AG04449 (cell line): ENCODE measurements at regions of chr14 and their contacts with region 1.

Region 1: DNA sequence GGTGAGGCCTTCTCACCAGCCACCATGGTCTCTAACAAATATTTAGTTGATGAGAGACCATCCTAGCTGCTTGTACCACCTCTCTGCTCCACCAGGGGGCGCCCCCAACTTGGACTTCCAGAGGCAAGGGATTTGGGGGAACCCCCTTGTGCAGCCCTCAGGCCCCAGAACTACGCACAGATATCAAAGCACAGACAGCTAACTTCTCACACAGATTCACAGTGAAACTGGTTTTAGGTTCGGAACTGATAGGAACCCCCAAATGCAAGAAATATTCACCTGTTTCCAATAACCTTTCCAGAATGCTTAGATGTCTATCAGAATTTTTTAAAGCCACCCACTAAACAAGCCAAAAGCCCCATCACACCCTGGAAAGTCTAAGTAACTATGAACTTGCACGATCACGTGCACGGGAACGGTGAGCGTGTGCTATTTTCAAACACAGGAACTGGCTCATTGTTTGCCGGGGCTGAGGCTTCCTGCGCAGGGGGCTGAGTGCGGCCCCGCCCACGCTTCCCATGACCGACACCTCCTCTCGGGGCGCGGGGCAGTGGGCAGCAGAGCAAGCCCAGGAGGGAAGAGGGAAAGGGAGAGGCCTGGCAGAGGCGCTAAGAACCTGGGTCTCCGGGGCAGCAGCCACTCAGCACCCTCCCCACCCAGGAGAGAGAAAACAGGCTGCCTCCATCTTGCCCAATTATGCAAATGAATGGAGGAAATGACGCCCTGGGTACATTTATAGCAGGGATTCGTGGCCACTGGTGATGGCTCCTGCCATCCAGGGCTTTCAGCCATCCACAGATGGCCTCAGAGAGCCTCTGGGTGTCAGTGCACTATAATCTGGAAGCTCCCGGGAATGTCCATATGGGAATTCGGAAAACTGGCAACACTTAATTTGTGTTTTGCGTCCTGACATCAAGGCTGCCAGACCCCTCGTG is 79.4 kb upstream of the GPR68 start:
- DNase-seq: no peak
- H3K4me3 ChIP-seq: peak overlapping the region; percentile 33
- CTCF ChIP-seq: peak; percentile 87

Region 2: GRCh38 chr14:91341751-91342154 is 17.8 kb after region 1 on chr14:
- CTCF ChIA-PET with region 1: interaction called, 81 read pairs
- POLR2A ChIA-PET with region 1: no interaction called
- DNase-seq: no peak
- H3K4me3 ChIP-seq: no peak overlapping the region
- CTCF ChIP-seq: no peak

Region 3: DNA sequence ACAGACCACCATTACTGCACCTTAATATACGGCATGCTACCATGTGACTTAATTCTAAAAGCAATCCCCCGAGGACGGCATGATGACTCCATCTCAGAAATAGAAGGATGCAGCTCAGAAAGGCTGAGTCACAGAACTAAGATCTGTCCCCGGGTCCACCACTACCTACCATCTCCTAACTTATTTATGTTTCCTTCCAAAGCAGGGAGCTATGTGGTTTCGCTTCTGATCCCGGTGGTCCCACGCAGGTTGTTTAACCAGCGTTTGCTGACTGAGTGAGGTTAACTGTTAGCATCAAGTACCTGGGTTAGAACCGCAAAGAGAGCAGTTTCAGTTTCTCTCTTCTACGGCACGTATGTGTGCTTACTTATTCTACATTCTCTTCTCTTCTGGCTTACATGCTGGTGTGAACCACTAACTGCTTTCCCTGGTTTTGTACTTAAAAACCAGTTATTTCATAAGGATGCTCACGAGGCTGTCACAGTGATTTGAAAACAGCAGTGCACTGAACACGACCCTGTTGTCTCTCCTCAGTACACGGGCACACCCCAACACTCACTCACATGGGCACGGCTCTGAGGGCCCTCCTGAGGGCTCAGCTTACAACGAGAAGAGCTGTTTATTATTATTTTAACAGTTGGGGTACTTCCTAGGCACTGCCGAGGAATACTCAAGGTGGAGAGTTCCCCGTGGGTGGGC is 27.0 kb after region 1 on chr14:
- CTCF ChIA-PET with region 1: interaction called, 12 read pairs
- POLR2A ChIA-PET with region 1: no interaction called
- DNase-seq: no peak
- H3K4me3 ChIP-seq: no peak overlapping the region
- CTCF ChIP-seq: no peak

Region 4: GRCh38 chr14:91418387-91419043 is 94.6 kb after region 1 on chr14:
- CTCF ChIA-PET with region 1: interaction called, 97 read pairs
- POLR2A ChIA-PET with region 1: no interaction called
- DNase-seq: no peak
- H3K4me3 ChIP-seq: peak overlapping the region; percentile 43
- CTCF ChIP-seq: peak; percentile 90